ENCODE measurements at regions of chr17 and their contacts with region 1.

Region 1: GRCh38 chr17:12667299-12667958 is 1.7 kb downstream of the MYOCD start:
- DNase-seq: no peak
- ATAC-seq: peak; percentile 76
- H3K4me3 ChIP-seq: peak overlapping the region; percentile 84 to 87
- H3K27ac ChIP-seq: peak overlapping the region; percentile 85 to 91
- H3K4me1 ChIP-seq: peaks cover 0 to 6% of the 10 kb centered on the region in 2 donors
- H3K27me3 ChIP-seq: no peaks in the 10 kb centered on the region

Region 2: DNA sequence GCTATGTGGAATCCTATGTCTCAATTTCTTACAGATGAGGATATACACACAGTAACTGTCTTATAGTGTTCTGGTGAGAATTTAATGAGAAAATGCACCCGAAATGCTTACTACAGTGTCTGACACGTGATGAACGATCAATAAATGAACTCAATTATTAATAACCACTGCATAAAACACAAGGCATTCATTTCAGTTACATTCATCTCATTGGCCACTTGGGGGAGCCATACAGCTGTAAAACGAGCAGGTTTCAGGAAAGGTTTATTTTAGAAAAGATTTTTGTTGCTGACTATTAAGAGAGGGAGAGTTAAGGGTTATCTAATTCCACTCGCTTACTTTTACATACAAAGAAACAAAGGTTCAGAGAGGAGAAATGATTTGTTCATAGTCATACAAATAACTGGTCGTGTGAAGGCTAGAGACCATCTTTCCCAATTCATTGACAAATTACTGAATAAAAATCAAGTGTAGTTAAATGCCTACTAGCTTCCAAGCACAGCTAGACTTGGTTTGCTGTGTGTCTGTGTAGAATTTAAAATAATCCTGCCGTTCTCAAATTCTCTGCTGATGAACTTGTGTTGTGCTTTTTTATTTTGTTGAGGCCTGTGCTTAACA is 486.7 kb before region 1 on chr17:
- intact Hi-C with region 1: loop called (anchors 2 to 5 kb)
- DNase-seq: no peak
- ATAC-seq: peak; percentile 76
- H3K4me3 ChIP-seq: no peak overlapping the region
- H3K27ac ChIP-seq: no peak overlapping the region
- H3K4me1 ChIP-seq: peaks cover 0 to 4% of the 10 kb centered on the region in 2 donors
- H3K27me3 ChIP-seq: no peaks in the 10 kb centered on the region

Region 3: GRCh38 chr17:12365805-12366204 is 301.6 kb before region 1 on chr17:
- intact Hi-C with region 1: loop called in 1 of 2 experiments (anchors 10 kb)
- DNase-seq: peak; percentile 75 to 83
- ATAC-seq: peak; percentile 83
- H3K4me3 ChIP-seq: no peak overlapping the region
- H3K27ac ChIP-seq: peak overlapping the region; percentile 87 to 95
- H3K4me1 ChIP-seq: peaks cover 0 to 9% of the 10 kb centered on the region in 2 donors
- H3K27me3 ChIP-seq: no peaks in the 10 kb centered on the region

Region 4: GRCh38 chr17:12637015-12637414 is 30.4 kb before region 1 on chr17:
- intact Hi-C with region 1: loop called in 1 of 2 experiments (anchors 2 kb)
- DNase-seq: peak in 1 of 2 donors; percentile 77
- ATAC-seq: peak; percentile 75
- H3K4me3 ChIP-seq: no peak overlapping the region
- H3K27ac ChIP-seq: peak overlapping the region; percentile 40 to 84
- H3K4me1 ChIP-seq: peaks cover 7 to 8% of the 10 kb centered on the region in 2 donors
- H3K27me3 ChIP-seq: no peaks in the 10 kb centered on the region

Region 5: DNA sequence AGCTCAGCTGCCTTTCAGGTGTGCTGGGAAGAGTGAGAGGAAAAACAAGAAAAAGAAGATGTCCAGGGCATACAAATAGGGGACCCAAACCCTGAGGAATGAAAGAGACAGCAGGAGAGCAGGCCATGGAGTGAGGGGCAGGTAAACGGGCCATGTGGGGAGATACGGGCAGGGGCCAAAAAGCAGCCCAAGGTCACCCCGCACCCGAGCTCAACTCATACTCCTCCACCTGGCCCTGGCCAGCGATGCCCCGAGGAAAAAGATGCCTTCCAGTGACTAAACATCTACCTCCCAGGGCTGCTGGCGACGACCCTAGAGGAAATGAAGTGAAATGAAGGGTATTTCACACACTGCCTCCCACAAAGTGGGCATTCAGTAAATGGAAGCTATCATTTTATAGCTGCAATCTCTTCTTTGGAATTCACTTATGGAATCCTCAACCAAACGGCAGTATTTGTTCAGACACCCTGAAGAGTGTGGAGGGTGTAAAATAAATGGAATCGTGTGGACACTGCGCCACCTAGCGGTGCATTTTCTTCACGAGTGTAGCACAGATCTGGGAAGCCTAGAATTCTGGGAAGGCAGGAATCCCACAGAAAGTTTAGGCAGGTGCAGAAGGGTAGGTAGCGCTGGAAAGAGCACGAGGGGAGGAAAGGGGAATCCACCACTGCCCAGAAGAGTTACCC is 335.5 kb after region 1 on chr17:
- intact Hi-C with region 1: loop called in 1 of 2 experiments (anchors 5 kb)
- DNase-seq: peak; percentile 73 to 93
- ATAC-seq: peak; percentile 90
- H3K4me3 ChIP-seq: no peak overlapping the region
- H3K27ac ChIP-seq: no peak overlapping the region
- H3K4me1 ChIP-seq: no peaks in the 10 kb centered on the region
- H3K27me3 ChIP-seq: no peaks in the 10 kb centered on the region

Measured in aorta (tissue), 5 donors.